CD4-positive, alpha-beta T cell (primary cell): ENCODE measurements at regions of chr4 and their contacts with region 1.

Region 1: DNA sequence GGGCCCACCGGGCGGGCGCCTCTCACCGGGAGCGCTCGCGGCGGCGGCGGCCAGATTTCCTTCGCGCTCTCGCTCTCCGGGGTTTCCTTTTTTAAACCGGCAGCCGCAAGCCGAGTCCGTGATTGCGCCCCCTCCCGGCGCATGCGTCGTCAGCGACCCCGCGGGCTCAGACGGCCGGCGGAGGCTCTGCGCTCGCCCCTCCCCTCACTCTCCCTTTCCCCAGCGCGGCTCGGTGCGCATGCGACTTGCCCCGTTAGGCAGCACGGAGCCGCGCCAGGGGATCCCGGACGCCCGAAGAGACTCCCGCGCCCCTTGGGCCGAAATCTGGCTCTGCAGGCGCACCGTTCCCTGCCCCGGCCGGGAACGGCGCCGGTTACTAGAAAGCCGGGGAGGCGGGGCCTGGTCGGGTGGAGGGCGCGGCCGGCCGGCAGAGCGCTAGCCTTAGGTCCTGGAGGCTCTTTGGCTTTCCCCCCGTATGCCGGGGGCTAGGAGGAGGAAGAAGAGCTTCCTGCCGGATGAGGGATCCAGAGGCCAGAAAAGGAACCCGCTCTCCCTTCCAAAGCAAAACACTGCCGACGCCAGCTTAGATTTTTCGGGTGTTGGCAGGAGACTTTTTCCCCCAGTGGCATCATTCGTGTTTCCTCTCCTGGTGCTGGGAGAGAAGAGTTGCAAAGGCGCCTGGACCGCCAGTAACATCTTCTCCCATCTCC is at the start of gene CLOCK:
- DNase-seq: peak; percentile 63 to 94 (median 81)
- ATAC-seq: peak; percentile 71
- H3K4me3 ChIP-seq: peak within 1 kb of the TSS; percentile 96
- H3K4me3 Mint-ChIP-seq: peak within 1 kb of the TSS; percentile 93
- H3K27ac ChIP-seq: peak within 1 kb of the TSS; percentile 75 to 82
- H3K27ac Mint-ChIP-seq: peak within 1 kb of the TSS; percentile 85
- H3K4me1 ChIP-seq: peaks cover 5% of the 10 kb centered on the region
- H3K4me1 Mint-ChIP-seq: peaks cover 39% of the 10 kb centered on the region
- H3K27me3 ChIP-seq: no peaks in the 10 kb centered on the region
- H3K27me3 Mint-ChIP-seq: no peaks in the 10 kb centered on the region
- CTCF ChIP-seq: peak; percentile 47
- total RNA-seq, gene CLOCK: 4.9 to 5.6 TPM

Region 2: GRCh38 chr4:55038176-55038890 is 508.6 kb before region 1 on chr4:
- CTCF ChIA-PET with region 1: no interaction called
- POLR2A ChIA-PET with region 1: no interaction called
- intact Hi-C with region 1: no loop called
- DNase-seq: no peak
- ATAC-seq: no peak
- H3K4me3 ChIP-seq: no peak overlapping the region
- H3K4me3 Mint-ChIP-seq: no peak overlapping the region
- H3K27ac ChIP-seq: no peak overlapping the region
- H3K27ac Mint-ChIP-seq: no peak overlapping the region
- H3K4me1 ChIP-seq: no peaks in the 10 kb centered on the region
- H3K4me1 Mint-ChIP-seq: no peaks in the 10 kb centered on the region
- H3K27me3 ChIP-seq: peaks cover 0 to 5% of the 10 kb centered on the region in 2 experiments
- H3K27me3 Mint-ChIP-seq: peaks cover 5% of the 10 kb centered on the region
- CTCF ChIP-seq: no peak

Region 3: DNA sequence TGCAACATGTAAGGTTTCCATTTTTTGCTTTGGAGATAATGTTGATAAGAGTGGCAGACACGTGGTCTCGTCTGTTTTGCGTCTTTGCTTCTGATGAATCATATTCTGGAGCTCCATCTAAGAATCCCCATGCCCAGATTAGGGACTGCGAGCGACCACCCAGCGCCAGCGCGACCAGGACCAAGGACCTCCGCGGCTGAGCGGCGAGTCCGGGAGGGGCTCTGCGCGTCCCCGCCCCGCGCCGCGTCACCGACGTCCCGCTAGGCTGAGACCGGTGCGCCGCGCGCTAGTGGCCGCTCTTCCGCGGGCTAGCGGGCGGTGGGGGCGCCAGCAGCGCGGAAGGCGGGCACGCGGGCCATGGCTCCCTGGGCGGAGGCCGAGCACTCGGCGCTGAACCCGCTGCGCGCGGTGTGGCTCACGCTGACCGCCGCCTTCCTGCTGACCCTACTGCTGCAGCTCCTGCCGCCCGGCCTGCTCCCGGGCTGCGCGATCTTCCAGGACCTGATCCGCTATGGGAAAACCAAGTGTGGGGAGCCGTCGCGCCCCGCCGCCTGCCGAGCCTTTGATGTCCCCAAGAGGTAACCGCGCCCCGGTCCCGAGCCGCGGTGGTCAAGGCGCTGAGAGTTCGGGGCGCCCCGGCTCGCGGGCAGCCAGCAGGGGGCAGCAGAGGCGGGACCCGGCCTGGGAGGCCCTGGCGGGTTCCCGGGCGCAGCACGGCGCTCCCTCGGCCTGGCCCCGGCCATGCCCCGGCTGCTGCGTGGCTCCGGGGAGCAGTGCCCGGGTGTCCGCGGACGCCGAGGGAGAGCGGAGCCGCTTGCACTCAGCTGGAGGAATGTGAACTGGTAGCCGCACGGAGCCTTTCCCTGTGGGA is 200.7 kb before region 1 on chr4 and contains the start of gene SRD5A3:
- CTCF ChIA-PET with region 1: interaction called, 9 read pairs
- POLR2A ChIA-PET with region 1: interaction called, 14 read pairs
- intact Hi-C with region 1: loop called in 1 of 2 experiments (anchors 2 kb)
- DNase-seq: peak; percentile 47 to 87 (median 73)
- ATAC-seq: peak; percentile 83
- H3K4me3 ChIP-seq: peak within 1 kb of the TSS; percentile 70
- H3K4me3 Mint-ChIP-seq: peak within 1 kb of the TSS; percentile 89
- H3K27ac ChIP-seq: peak within 1 kb of the TSS; percentile 56 to 68
- H3K27ac Mint-ChIP-seq: peak within 1 kb of the TSS; percentile 72
- H3K4me1 ChIP-seq: peaks cover 11% of the 10 kb centered on the region
- H3K4me1 Mint-ChIP-seq: peaks cover 18% of the 10 kb centered on the region
- H3K27me3 ChIP-seq: no peaks in the 10 kb centered on the region
- H3K27me3 Mint-ChIP-seq: no peaks in the 10 kb centered on the region
- CTCF ChIP-seq: peak; percentile 99
- total RNA-seq, gene SRD5A3: 2.1 to 2.2 TPM

Region 4: GRCh38 chr4:55444827-55445226 is 102.1 kb before region 1 on chr4:
- CTCF ChIA-PET with region 1: no interaction called
- POLR2A ChIA-PET with region 1: interaction called, 4 read pairs
- intact Hi-C with region 1: loop called (anchors 5 kb)
- DNase-seq: peak in 2 of 14 experiments; percentile 20 to 26
- ATAC-seq: no peak
- H3K4me3 ChIP-seq: no peak overlapping the region
- H3K4me3 Mint-ChIP-seq: no peak overlapping the region
- H3K27ac ChIP-seq: no peak overlapping the region
- H3K27ac Mint-ChIP-seq: no peak overlapping the region
- H3K4me1 ChIP-seq: peaks cover 5% of the 10 kb centered on the region
- H3K4me1 Mint-ChIP-seq: peaks cover 23% of the 10 kb centered on the region
- H3K27me3 ChIP-seq: no peaks in the 10 kb centered on the region
- H3K27me3 Mint-ChIP-seq: no peaks in the 10 kb centered on the region
- CTCF ChIP-seq: no peak

Region 5: GRCh38 chr4:55853484-55854046 is 306.7 kb after region 1 on chr4 and contains the start of gene EXOC1:
- CTCF ChIA-PET with region 1: no interaction called
- POLR2A ChIA-PET with region 1: interaction called, 5 read pairs
- intact Hi-C with region 1: loop called (anchors 5 kb)
- DNase-seq: peak; percentile 93 to 99 (median 97)
- ATAC-seq: peak; percentile 95
- H3K4me3 ChIP-seq: peak within 1 kb of the TSS; percentile 96
- H3K4me3 Mint-ChIP-seq: no peak within 1 kb of the TSS
- H3K27ac ChIP-seq: peak within 1 kb of the TSS; percentile 68 to 86
- H3K27ac Mint-ChIP-seq: peak within 1 kb of the TSS; percentile 60
- H3K4me1 ChIP-seq: peaks cover 28% of the 10 kb centered on the region
- H3K4me1 Mint-ChIP-seq: peaks cover 33% of the 10 kb centered on the region
- H3K27me3 ChIP-seq: no peaks in the 10 kb centered on the region
- H3K27me3 Mint-ChIP-seq: no peaks in the 10 kb centered on the region
- CTCF ChIP-seq: no peak
- total RNA-seq, gene EXOC1: 15.2 to 15.7 TPM

Region 6: DNA sequence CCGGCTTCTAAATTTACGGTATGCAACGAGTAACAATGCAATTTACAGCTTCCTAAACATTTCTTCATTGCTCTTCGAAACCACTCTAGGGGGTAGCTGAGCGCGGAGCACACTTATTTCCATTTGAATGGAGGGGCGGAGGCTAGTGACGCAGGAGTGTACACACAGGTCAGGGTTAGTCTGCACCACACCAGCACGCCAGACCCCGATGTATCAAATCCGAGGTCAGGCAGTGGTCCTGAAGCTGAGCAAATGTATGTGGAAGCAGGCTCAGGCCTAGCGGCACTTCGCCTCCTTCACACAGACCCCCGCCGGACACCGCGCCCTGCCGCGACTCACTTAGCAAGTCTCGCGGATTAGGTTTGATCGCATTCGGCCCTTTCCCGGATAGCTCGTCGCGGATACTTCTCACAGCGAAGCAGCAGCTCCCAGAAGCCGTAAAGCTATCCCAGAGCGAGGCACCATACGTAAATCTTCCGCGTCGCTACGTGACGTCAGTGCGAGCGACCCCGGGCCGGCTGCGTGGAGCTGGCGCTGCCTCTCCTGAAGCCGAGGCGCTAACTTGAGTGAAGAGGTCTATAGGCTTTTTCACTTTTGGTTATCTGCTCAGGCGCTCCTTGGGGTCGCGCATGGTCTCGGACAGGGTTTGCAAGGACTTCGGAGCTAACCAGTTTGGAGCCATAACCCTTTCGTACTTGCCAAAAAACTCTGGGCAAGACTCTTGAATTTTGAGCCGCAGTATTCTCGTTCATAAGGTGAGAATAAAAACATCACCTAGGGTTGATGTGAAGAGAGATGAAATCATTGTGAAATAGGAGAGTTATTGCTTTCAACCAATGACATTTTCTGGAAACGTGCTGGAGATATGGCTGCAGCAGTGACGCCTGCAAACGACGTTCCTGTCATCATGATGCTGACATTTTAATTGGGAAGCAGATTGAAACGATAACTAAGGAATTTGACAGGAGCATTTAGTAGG is 840.4 kb after region 1 on chr4 and contains the start of gene AASDH:
- CTCF ChIA-PET with region 1: no interaction called
- POLR2A ChIA-PET with region 1: interaction called, 10 read pairs
- intact Hi-C with region 1: no loop called
- DNase-seq: peak; percentile 85 to 99 (median 96)
- ATAC-seq: peak; percentile 86
- H3K4me3 ChIP-seq: peak within 1 kb of the TSS; percentile 97
- H3K4me3 Mint-ChIP-seq: peak within 1 kb of the TSS; percentile 93
- H3K27ac ChIP-seq: peak within 1 kb of the TSS; percentile 91 to 97
- H3K27ac Mint-ChIP-seq: peak within 1 kb of the TSS; percentile 99
- H3K4me1 ChIP-seq: peaks cover 17% of the 10 kb centered on the region
- H3K4me1 Mint-ChIP-seq: peaks cover 46% of the 10 kb centered on the region
- H3K27me3 ChIP-seq: no peaks in the 10 kb centered on the region
- H3K27me3 Mint-ChIP-seq: no peaks in the 10 kb centered on the region
- CTCF ChIP-seq: no peak
- total RNA-seq, gene AASDH: 10.2 to 10.6 TPM

Region 7: GRCh38 chr4:56958111-56958517 is 1411.2 kb after region 1 on chr4:
- CTCF ChIA-PET with region 1: no interaction called
- POLR2A ChIA-PET with region 1: no interaction called
- intact Hi-C with region 1: no loop called
- DNase-seq: peak in 2 of 14 experiments; percentile 45 to 62
- ATAC-seq: no peak
- H3K4me3 ChIP-seq: no peak overlapping the region
- H3K4me3 Mint-ChIP-seq: no peak overlapping the region
- H3K27ac ChIP-seq: no peak overlapping the region
- H3K27ac Mint-ChIP-seq: no peak overlapping the region
- H3K4me1 ChIP-seq: no peaks in the 10 kb centered on the region
- H3K4me1 Mint-ChIP-seq: no peaks in the 10 kb centered on the region
- H3K27me3 ChIP-seq: no peaks in the 10 kb centered on the region
- H3K27me3 Mint-ChIP-seq: no peaks in the 10 kb centered on the region
- CTCF ChIP-seq: no peak